ENCODE measurements at regions of chr9 and their contacts with region 1.

Region 1: GRCh38 chr9:121074635-121075385 is at the start of gene CNTRL:
- DNase-seq: peak; percentile 92
- H3K4me3 ChIP-seq: peak within 1 kb of the TSS; percentile 85
- H3K27ac ChIP-seq: peak within 1 kb of the TSS; percentile 99
- H3K4me1 ChIP-seq: peaks cover 58% of the 10 kb centered on the region
- CTCF ChIP-seq: no peak
- total RNA-seq, gene CNTRL: 81.4 and 94.9 TPM in 2 replicates

Region 2: DNA sequence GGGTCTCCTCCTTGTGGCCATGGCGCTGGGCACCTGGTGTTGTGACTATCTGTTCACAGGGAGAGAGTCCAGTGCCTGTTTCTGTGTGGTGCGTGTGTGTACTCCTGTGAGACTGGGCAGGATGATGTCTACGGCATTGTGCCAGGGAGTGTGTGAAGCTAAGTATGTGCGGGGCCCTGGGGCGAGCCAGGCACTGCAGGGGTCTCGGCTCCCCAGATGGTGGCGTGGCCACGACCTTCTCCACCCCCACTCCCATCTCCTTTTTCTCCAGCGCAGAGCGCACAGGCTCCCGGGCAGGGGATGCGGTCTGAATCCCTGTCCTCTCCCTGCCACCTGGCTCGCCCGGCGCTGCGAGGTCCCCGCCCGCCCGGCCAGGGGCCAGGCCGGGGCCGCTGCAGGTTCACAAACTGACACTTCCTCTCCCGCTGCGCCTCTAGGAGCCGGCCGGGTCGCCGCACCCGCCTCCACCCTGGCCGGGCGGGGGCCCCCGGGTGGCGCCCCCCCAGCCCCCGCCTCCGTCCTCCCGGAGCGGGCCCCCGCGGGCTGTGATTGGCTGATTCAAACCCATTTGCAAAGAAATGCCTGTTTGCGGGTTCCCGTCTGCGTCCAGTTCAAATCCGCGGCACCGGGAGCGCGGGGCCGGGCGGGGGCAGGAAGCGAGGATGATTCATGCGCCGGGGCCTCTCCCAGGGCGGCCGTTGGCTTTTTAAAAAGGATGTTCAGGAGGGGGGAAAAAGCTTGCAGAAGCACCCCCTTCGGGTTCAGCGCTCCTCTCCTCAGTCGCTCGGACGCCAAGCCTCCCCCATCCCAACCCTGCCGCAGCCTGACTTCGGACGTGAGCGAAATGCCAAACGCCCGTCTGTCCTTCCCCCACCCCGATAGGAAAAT is 198.6 kb before region 1 on chr9:
- CTCF ChIA-PET with region 1: no interaction called
- POLR2A ChIA-PET with region 1: interaction called, 3 read pairs
- intact Hi-C with region 1: loop called (anchors 2 kb)
- DNase-seq: peak; percentile 95
- H3K4me3 ChIP-seq: peak overlapping the region; percentile 93
- H3K27ac ChIP-seq: peak overlapping the region; percentile 96
- H3K4me1 ChIP-seq: peaks cover 70% of the 10 kb centered on the region
- CTCF ChIP-seq: peak; percentile 58

Region 3: DNA sequence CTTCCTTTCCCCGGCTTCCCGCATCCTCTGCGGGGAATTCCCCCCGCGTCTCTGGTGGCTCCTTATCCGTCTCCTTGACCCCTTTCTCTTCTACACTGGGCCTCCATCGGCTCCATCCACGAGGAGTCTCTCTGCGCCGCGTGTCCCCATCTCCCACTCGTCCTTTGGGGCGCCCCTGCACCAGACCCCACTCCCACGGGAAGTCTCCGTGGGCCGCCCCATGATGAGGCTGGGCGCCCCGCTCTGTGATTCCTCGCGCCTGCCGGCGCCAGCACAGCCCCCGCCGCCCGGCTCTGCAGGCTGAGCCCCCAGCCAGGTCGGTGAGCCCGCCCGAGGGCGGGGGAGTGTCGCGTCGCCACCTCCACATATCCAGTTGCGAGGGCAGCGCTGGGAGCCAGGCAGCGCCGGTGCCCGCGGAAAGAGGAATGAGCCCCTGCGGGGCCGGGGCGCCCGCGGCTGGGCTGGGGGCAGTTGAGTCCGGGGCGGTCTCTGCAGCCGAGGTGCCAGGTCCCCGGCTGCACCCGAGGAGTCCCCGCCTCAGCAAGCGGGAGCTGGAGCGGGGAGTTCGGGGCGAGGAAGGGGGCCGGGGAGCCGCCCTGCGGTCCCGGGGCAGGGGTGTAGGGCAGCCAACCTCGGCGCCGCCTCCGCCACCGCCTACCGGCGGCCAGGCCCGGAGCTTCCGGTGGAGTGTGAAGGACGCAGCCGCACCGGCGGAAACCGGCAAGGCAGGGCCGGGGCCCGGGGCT is 146.2 kb before region 1 on chr9:
- CTCF ChIA-PET with region 1: no interaction called
- POLR2A ChIA-PET with region 1: interaction called, 3 read pairs
- intact Hi-C with region 1: loop called (anchors 2 kb)
- DNase-seq: peak; percentile 87
- H3K4me3 ChIP-seq: peak overlapping the region; percentile 74
- H3K27ac ChIP-seq: peak overlapping the region; percentile 96
- H3K4me1 ChIP-seq: peaks cover 97% of the 10 kb centered on the region
- CTCF ChIP-seq: no peak

Region 4: GRCh38 chr9:121023064-121023463 is 51.7 kb before region 1 on chr9:
- CTCF ChIA-PET with region 1: no interaction called
- POLR2A ChIA-PET with region 1: no interaction called
- intact Hi-C with region 1: no loop called
- DNase-seq: peak; percentile 20
- H3K4me3 ChIP-seq: no peak overlapping the region
- H3K27ac ChIP-seq: no peak overlapping the region
- H3K4me1 ChIP-seq: no peaks in the 10 kb centered on the region
- CTCF ChIP-seq: peak; percentile 47; the same call in 1 of the 2 replicates

Region 5: GRCh38 chr9:121059998-121060636 is 14.7 kb before region 1 on chr9:
- CTCF ChIA-PET with region 1: interaction called, 3 read pairs
- POLR2A ChIA-PET with region 1: interaction called, 8 read pairs
- intact Hi-C with region 1: loop called (anchors 1 kb)
- DNase-seq: peak; percentile 82
- H3K4me3 ChIP-seq: peak overlapping the region; percentile 11
- H3K27ac ChIP-seq: no peak overlapping the region
- H3K4me1 ChIP-seq: peaks cover 38% of the 10 kb centered on the region
- CTCF ChIP-seq: peak; percentile 95

Region 6: GRCh38 chr9:121105531-121105930 is 30.7 kb after region 1 on chr9:
- CTCF ChIA-PET with region 1: no interaction called
- POLR2A ChIA-PET with region 1: no interaction called
- intact Hi-C with region 1: no loop called
- DNase-seq: no peak
- H3K4me3 ChIP-seq: no peak overlapping the region
- H3K27ac ChIP-seq: no peak overlapping the region
- H3K4me1 ChIP-seq: peaks cover 3% of the 10 kb centered on the region
- CTCF ChIP-seq: no peak

Region 7: DNA sequence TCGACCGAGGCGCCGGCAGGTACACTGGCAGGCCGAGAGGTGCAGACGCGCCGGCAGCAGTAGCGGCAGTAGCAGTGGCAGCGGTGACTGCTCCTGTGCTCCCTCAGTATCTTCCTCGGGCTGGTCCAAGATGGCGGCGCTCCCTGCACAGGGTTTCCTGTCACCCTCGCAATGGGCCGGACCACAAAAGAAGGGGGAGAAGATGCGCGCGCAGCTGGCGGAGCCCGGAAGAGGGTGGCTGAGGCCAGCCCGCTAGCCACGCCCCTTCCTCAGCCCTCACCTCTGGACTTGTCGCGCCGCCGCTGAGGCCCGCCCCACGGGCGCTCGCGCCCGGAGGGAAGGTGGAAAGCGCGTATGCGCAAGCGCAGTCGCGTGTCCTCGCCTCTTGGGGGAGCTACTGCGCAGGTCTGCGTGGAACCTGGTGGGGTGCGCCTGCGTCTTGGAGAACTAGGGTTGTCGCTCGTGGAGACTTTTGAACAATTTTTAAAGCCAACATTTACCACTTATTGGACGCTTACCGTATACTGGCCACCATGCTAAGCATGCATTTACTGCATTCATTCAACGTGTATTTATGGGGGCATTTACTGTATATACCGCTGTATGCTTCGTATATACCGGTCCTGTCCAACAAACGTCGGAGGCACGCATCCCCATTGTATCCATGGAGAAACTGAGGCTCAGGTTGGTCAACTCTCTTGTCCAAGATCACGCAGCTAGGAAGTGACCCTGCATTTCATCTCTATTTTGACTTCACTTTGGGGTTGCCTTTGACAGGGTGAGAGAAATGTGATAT is 127.1 kb after region 1 on chr9 and contains the start of gene RAB14:
- CTCF ChIA-PET with region 1: no interaction called
- POLR2A ChIA-PET with region 1: no interaction called
- intact Hi-C with region 1: loop called (anchors 2 kb)
- DNase-seq: peak; percentile 99
- H3K4me3 ChIP-seq: peak within 1 kb of the TSS; percentile 99
- H3K27ac ChIP-seq: peak within 1 kb of the TSS; percentile 81
- H3K4me1 ChIP-seq: peaks cover 58% of the 10 kb centered on the region
- CTCF ChIP-seq: peak; percentile 83
- total RNA-seq, gene RAB14: 8.1 and 8.6 TPM in 2 replicates

Measured in OCI-LY7 (cell line).